Dorsolateral prefrontal cortex (tissue), 120 donors: ENCODE measurements at regions of chr9 and their contacts with region 1.

Region 1: GRCh38 chr9:76820431-76820830 is 56.2 kb downstream of the PCA3 start:
- DNase-seq: no peak
- H3K4me3 ChIP-seq: no peak overlapping the region
- H3K27ac ChIP-seq: peak overlapping the region in 34 of 59 donors; percentile 1 to 93 (median 58)
- H3K27me3 ChIP-seq: no peaks in the 10 kb centered on the region
- CTCF ChIP-seq: no peak

Region 2: DNA sequence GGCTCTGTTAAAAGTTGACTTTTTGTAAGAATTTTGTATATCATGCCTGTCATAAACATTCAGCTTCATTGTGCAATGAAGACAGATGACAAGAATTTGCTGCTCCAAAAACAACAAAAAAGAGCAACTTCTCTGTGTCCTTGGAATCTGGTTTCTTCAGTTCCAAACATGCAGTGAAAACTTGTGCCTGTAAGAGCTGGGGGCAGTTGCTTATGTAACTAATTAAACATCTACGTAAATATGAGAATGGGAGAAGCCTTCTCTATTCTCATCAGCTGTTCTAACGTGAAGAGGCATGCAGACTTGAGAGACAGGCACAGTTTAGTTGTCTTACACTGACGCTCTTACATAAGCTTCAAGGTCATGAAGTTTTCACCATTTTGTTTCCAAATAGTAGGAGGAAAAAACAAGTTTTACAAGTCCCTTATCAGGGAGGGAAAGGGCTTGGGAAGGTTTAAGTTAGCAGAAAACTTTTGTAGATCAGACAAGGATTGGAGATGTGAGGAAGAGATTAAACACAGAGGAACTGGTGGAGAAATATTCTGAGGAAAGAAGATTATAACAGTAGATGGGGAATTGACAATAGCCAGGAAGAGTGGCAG is 596.6 kb before region 1 on chr9:
- intact Hi-C with region 1: no loop called
- DNase-seq: no peak
- H3K4me3 ChIP-seq: no peak overlapping the region
- H3K27ac ChIP-seq: no peak overlapping the region
- H3K27me3 ChIP-seq: no peaks in the 10 kb centered on the region
- CTCF ChIP-seq: no peak

Region 3: GRCh38 chr9:76687861-76688391 is 132.5 kb before region 1 on chr9:
- intact Hi-C with region 1: no loop called
- DNase-seq: no peak
- H3K4me3 ChIP-seq: no peak overlapping the region
- H3K27ac ChIP-seq: peak overlapping the region in 21 of 59 donors; percentile 1 to 85 (median 42)
- H3K27me3 ChIP-seq: no peaks in the 10 kb centered on the region
- CTCF ChIP-seq: no peak

Region 4: GRCh38 chr9:76859860-76860259 is 39.4 kb after region 1 on chr9:
- intact Hi-C with region 1: no loop called
- DNase-seq: no peak
- H3K4me3 ChIP-seq: no peak overlapping the region
- H3K27ac ChIP-seq: peak overlapping the region in 4 of 59 donors; percentile 10 to 64 (median 18)
- H3K27me3 ChIP-seq: no peaks in the 10 kb centered on the region
- CTCF ChIP-seq: no peak

Region 5: DNA sequence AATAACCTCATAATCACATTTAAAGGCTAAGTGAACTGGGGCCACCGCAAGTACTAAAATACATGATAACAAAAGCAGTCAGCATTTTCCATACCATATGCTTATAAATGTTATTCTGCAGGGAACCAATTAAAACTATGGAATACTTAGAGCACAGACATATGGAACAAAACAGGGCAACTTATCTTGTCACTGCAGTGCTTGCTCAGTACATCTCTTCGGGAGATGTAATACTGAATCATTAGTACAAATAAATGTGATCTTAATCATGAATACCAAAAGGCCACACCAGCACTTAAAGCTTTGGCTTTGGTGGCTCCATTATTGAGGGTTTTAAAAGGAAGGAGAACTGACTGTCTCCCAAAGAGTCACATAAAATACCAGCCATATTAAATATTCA is 53.4 kb after region 1 on chr9:
- intact Hi-C with region 1: loop called in 1 of 2 experiments (anchors 2 kb)
- DNase-seq: no peak
- H3K4me3 ChIP-seq: peak overlapping the region in 28 of 59 donors; percentile 0 to 50 (median 24)
- H3K27ac ChIP-seq: peak overlapping the region in 58 of 59 donors; percentile 6 to 93 (median 81)
- H3K27me3 ChIP-seq: peaks cover 0 to 4% (median 0%) of the 10 kb centered on the region in 45 donors
- CTCF ChIP-seq: no peak